Heart left ventricle (tissue), 16 donors: ENCODE measurements at regions of chr21 and their contacts with region 1.

Region 1: GRCh38 chr21:32475164-32475812 is 62.8 kb downstream of the EVA1C start:
- DNase-seq: no peak
- ATAC-seq: peak in 1 of 4 donors; percentile 38
- H3K4me3 ChIP-seq: no peak overlapping the region
- H3K27ac ChIP-seq: peak overlapping the region in 1 of 12 donors; percentile 19
- H3K4me1 ChIP-seq: peaks cover 0 to 21% (median 10%) of the 10 kb centered on the region in 12 donors
- H3K27me3 ChIP-seq: no peaks in the 10 kb centered on the region
- CTCF ChIP-seq: no peak
- POLR2A ChIP-seq: no peak

Region 2: GRCh38 chr21:31988492-31989290 is 486.6 kb before region 1 on chr21:
- intact Hi-C with region 1: no loop called
- DNase-seq: no peak
- ATAC-seq: peak in 1 of 4 donors; percentile 28
- H3K4me3 ChIP-seq: no peak overlapping the region
- H3K27ac ChIP-seq: no peak overlapping the region
- H3K4me1 ChIP-seq: no peaks in the 10 kb centered on the region
- H3K27me3 ChIP-seq: no peaks in the 10 kb centered on the region
- CTCF ChIP-seq: no peak
- POLR2A ChIP-seq: no peak

Region 3: DNA sequence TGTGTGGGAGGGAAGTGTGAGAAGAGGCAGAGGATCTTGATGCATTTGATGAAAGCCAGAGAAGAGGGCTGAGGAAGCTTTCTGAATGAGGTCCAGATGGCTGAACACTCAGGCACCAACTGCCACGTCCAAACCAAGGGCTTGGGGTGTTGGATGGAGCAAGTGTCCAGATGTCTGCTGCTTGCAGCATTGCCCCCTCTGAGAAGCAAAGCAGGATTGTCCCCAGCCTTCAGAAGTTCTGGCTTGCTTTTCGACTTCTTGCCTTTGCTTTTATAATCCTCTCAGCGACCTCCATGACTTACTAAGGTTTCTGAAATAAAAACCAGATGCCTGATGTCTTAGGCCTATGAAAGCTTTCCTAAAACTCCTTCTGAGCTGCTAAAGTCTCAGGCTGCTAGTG is 420.0 kb before region 1 on chr21:
- intact Hi-C with region 1: no loop called
- DNase-seq: no peak
- ATAC-seq: no peak
- H3K4me3 ChIP-seq: no peak overlapping the region
- H3K27ac ChIP-seq: no peak overlapping the region
- H3K4me1 ChIP-seq: no peaks in the 10 kb centered on the region
- H3K27me3 ChIP-seq: no peaks in the 10 kb centered on the region
- CTCF ChIP-seq: no peak
- POLR2A ChIP-seq: no peak

Region 4: DNA sequence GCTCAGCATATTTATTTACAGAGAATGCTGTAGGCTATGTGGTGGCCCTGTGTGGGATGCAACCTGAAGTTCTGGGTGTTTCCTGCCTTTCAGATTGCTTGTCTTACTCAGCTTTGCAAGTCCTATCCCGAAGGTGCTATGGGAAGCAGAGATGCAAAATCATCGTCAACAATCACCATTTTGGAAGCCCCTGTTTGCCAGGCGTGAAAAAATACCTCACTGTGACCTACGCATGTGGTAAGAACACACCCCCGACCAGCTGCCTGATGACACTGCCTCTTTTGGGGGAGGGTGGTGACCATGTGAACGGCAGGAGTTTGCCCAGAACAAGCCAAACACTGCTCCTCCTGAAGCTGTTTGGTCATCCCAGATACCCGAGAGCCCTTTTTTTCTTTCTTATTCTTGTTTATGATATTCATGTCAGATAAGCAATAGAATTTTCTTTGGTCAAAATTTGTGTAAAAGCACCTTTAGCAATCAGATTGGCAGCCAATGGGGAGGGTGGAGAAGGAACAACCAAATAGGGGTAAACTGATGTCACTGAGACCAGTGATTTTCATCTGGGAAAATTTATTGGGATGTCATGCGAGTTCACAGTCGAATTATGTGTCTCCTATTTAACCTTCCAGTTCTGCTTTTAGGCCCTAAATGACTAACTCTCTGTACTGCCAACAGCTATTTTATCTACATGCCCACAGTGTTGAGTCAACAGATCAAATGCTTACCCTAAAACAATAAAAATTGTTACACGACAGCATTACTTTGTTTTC is 19.8 kb after region 1 on chr21:
- intact Hi-C with region 1: no loop called
- DNase-seq: no peak
- ATAC-seq: no peak
- H3K4me3 ChIP-seq: no peak overlapping the region
- H3K27ac ChIP-seq: peak overlapping the region in 3 of 12 donors; percentile 8 to 55 (median 49)
- H3K4me1 ChIP-seq: peaks cover 6 to 53% (median 33%) of the 10 kb centered on the region in 12 donors
- H3K27me3 ChIP-seq: no peaks in the 10 kb centered on the region
- CTCF ChIP-seq: no peak
- POLR2A ChIP-seq: no peak

Region 5: DNA sequence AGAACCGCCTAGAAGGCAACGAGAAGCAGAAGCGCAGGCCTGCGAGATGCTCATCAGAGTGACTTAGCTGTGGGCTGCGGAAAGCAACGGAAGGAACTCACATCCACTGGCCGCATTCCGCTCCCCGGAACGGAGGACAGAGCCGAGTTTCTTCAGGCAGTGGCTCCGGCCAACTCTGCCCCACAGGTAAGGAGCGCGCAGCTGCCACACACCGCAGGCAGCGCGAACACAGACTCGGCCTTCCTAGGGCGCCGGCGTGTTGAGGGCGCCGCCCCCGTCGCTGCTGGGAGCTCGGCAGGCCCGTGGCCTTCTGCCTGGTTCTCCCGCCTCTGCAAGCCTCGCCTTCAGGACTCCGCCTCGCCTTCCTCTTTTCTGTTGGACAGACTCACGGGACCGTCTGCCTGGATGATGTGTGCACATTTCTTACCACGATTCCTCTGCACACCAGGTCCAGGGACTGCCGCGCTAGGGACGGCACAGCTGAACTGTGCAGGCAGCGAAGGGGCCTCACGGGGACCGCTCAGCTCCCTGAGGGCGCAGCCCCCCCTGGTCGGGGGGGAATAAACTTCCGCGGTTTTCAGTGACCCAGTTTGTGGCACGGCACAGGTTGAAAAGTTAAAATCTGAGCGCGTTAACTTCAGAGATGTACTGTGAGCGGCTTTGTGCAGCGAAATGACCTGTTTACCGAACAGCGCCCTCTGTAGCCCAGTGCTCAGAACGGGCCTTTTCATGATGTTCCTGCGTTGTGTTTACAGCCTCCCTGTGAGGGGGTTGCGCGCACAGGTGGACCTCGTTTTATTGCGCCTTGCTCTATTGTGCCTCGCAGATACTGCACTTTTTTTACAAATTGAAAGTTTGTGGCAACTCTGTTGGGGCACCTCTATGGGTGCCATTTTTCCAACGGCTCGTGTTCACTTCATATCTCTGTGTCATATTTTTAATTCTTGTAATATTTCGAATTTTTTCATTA is 94.3 kb after region 1 on chr21:
- intact Hi-C with region 1: loop called in 1 of 10 experiments (anchors 10 kb)
- DNase-seq: peak; percentile 72 to 85 (median 75)
- ATAC-seq: peak; percentile 84 to 94 (median 94)
- H3K4me3 ChIP-seq: peak overlapping the region; percentile 28 to 73 (median 60)
- H3K27ac ChIP-seq: peak overlapping the region; percentile 37 to 88 (median 81)
- H3K4me1 ChIP-seq: peaks cover 0 to 19% (median 4%) of the 10 kb centered on the region in 12 donors
- H3K27me3 ChIP-seq: no peaks in the 10 kb centered on the region
- CTCF ChIP-seq: peak; percentile 64 to 90 (median 83)
- POLR2A ChIP-seq: peak in 1 of 2 donors; percentile 32